ENCODE measurements at regions of chr10 and their contacts with region 1.

Region 1: GRCh38 chr10:16843252-16843870 is 26.1 kb upstream of the RSU1 start:
- DNase-seq: peak; percentile 24
- CTCF ChIP-seq: peak; percentile 42

Region 2: GRCh38 chr10:16258291-16259040 is 584.9 kb before region 1 on chr10:
- in situ Hi-C with region 1: no loop called
- DNase-seq: no peak
- CTCF ChIP-seq: no peak

Region 3: GRCh38 chr10:17257466-17258321 is 414.3 kb after region 1 on chr10:
- in situ Hi-C with region 1: loop called (anchors 5 kb)
- DNase-seq: peak; percentile 35
- CTCF ChIP-seq: peak; percentile 61

Measured in GM13976 (cell line).